H1 (cell line): ENCODE measurements at regions of chr1 and their contacts with region 1.

Region 1: GRCh38 chr1:157073944-157074767 is 25.5 kb downstream of the ETV3L start:
- DNase-seq: peak; percentile 54 to 84
- H3K4me3 ChIP-seq: no peak overlapping the region
- H3K27ac ChIP-seq: no peak overlapping the region
- H3K4me1 ChIP-seq: no peaks in the 10 kb centered on the region
- H3K27me3 ChIP-seq: peaks cover 0 to 3% (median 1%) of the 10 kb centered on the region in 4 experiments; a peak in 2 of 7 replicates
- CTCF ChIP-seq: peak; percentile 63 to 82 (median 75)
- EP300 ChIP-seq: no peak
- POLR2A ChIP-seq: no peak
- RAD21 ChIP-seq: peak; percentile 57 to 69

Region 2: DNA sequence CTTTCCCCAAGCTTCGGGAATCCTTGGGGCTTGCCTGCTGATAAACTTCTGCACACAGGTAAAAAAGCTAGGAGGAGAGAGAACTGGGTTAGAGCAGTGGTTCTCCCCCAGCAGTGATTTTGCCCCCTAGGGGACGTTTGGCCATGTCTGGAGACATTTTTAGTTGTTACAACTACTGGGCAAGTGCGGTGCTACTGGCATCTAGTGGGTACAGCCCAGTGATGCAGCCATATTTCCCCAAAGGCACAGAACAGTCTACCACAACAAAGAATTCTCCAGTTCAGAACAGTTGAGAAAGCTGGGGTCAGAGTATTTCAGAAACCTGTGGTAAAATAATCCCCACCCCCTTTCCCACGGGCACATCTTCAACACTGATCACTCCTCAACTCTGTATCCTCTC is 112.4 kb before region 1 on chr1:
- CTCF ChIA-PET with region 1: interaction called, 13 read pairs
- POLR2A ChIA-PET with region 1: no interaction called
- DNase-seq: no peak
- H3K4me3 ChIP-seq: no peak overlapping the region
- H3K27ac ChIP-seq: no peak overlapping the region
- H3K4me1 ChIP-seq: no peaks in the 10 kb centered on the region
- H3K27me3 ChIP-seq: no peaks in the 10 kb centered on the region
- CTCF ChIP-seq: peak; percentile 13 to 75 (median 47)
- EP300 ChIP-seq: no peak
- POLR2A ChIP-seq: no peak
- RAD21 ChIP-seq: peak; percentile 31 to 49; a peak in 3 of 4 replicates

Region 3: GRCh38 chr1:156999596-157000320 is 74.4 kb before region 1 on chr1:
- CTCF ChIA-PET with region 1: interaction called, 11 read pairs
- POLR2A ChIA-PET with region 1: no interaction called
- DNase-seq: peak in 1 of 2 experiments; percentile 26
- H3K4me3 ChIP-seq: no peak overlapping the region
- H3K27ac ChIP-seq: no peak overlapping the region
- H3K4me1 ChIP-seq: peaks cover 2 to 18% (median 15%) of the 10 kb centered on the region in 4 experiments; a peak in 5 of 7 replicates
- H3K27me3 ChIP-seq: no peaks in the 10 kb centered on the region
- CTCF ChIP-seq: no peak
- EP300 ChIP-seq: no peak
- POLR2A ChIP-seq: no peak
- RAD21 ChIP-seq: no peak

Region 4: DNA sequence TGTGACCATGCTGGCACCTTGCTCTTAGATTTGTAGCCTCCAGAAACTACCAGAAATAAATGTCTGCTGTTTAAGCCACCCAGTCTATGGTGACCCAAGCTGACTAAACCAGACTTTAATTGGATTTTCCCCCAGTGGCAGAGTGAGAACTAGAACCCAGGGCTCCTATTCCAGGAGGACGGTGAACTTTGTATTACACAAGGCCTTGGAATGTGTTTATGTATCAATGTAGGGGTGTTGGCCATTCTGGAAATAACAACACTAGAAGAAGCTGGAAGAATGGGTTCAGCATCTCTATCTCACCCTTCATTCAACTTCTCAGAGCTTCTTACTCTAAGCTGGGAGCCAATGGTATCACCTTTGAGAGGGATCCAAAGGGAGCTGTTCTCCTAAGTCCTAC is 65.7 kb before region 1 on chr1:
- CTCF ChIA-PET with region 1: interaction called, 11 read pairs
- POLR2A ChIA-PET with region 1: no interaction called
- DNase-seq: no peak
- H3K4me3 ChIP-seq: no peak overlapping the region
- H3K27ac ChIP-seq: no peak overlapping the region
- H3K4me1 ChIP-seq: peaks cover 4 to 19% (median 12%) of the 10 kb centered on the region in 4 experiments; a peak in 6 of 7 replicates
- H3K27me3 ChIP-seq: no peaks in the 10 kb centered on the region
- CTCF ChIP-seq: no peak
- EP300 ChIP-seq: no peak
- POLR2A ChIP-seq: no peak
- RAD21 ChIP-seq: no peak

Region 5: DNA sequence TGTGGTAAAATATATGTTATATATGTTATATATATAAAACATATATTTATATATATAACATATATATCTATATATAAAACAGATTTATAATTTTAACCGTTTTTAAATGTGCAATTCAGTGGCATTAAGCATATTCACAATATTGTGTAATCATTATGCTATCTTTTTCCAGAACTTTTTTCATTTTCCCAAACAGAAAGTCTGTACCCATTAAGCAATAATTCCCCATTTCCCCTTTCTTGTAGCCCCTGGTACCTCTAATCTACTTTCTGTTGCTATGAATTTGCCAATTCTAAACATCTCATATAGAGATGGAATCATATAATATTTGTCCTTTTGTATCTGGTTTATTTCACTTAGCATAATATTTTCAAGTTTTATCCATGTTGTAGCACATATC is 17.9 kb before region 1 on chr1:
- CTCF ChIA-PET with region 1: interaction called, 11 read pairs
- POLR2A ChIA-PET with region 1: interaction called, 4 read pairs
- DNase-seq: no peak
- H3K4me3 ChIP-seq: no peak overlapping the region
- H3K27ac ChIP-seq: no peak overlapping the region
- H3K4me1 ChIP-seq: no peaks in the 10 kb centered on the region
- H3K27me3 ChIP-seq: no peaks in the 10 kb centered on the region
- CTCF ChIP-seq: no peak
- EP300 ChIP-seq: no peak
- POLR2A ChIP-seq: no peak
- RAD21 ChIP-seq: no peak